Common myeloid progenitor, CD34-positive (primary cell): ENCODE measurements at regions of chr22 and their contacts with region 1.

Region 1: GRCh38 chr22:22848364-22848866 is 39.2 kb upstream of the IGLL5 start:
- DNase-seq: peak; percentile 48 to 66 (median 52)
- H3K4me3 ChIP-seq: no peak overlapping the region
- H3K27ac ChIP-seq: no peak overlapping the region
- H3K4me1 ChIP-seq: peaks cover 0 to 4% (median 1%) of the 10 kb centered on the region in 4 experiments
- H3K27me3 ChIP-seq: peaks cover 0 to 11% (median 4%) of the 10 kb centered on the region in 5 experiments

Region 2: DNA sequence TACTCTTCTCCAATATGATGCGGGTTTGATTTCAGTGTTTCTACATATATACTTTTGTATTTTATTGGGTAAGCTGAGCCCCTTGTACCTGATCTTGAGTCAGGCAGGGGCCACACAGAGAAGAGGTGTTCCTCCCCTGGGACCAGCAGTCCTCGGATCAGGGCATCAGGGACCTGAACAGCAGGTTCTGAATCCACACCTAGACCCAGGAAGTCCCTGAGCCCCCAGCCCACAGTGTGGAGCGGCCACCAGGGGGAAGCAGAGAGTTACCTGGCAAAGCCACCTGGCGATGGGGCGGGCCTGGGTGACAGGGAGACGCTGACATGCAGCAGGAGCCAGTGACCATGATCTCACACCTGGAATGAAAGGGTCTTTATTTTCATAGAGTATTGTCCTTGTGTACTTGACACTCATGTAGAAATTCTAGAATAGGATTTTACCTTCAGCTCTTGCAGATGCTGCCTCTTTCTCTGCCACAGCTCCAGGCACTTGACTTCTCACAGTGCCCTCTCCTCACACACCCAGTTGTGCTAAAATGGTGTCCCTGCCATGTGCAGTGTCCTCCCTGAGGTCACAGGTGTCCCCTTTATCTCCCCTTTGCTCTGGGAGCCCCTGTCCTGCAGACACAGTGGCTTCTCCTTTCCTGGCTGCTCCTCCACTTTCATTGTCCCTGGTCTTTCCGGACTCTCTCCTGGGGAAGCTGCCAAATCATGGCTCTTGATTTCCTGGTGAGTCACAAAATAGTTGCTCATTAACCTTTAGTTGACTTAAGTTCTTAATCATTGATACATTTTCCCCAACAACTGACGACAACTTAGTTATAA is 155.5 kb before region 1 on chr22:
- CTCF ChIA-PET with region 1: no interaction called
- POLR2A ChIA-PET with region 1: no interaction called
- DNase-seq: peak; percentile 19 to 50 (median 47)
- H3K4me3 ChIP-seq: no peak overlapping the region
- H3K27ac ChIP-seq: no peak overlapping the region
- H3K4me1 ChIP-seq: peaks cover 0 to 10% (median 6%) of the 10 kb centered on the region in 4 experiments
- H3K27me3 ChIP-seq: no peaks in the 10 kb centered on the region

Region 3: GRCh38 chr22:22737590-22737989 is 110.8 kb before region 1 on chr22:
- CTCF ChIA-PET with region 1: no interaction called
- POLR2A ChIA-PET with region 1: no interaction called
- DNase-seq: no peak
- H3K4me3 ChIP-seq: no peak overlapping the region
- H3K27ac ChIP-seq: no peak overlapping the region
- H3K4me1 ChIP-seq: peaks cover 0 to 4% (median 0%) of the 10 kb centered on the region in 4 experiments
- H3K27me3 ChIP-seq: peaks cover 0 to 11% (median 0%) of the 10 kb centered on the region in 5 experiments

Region 4: DNA sequence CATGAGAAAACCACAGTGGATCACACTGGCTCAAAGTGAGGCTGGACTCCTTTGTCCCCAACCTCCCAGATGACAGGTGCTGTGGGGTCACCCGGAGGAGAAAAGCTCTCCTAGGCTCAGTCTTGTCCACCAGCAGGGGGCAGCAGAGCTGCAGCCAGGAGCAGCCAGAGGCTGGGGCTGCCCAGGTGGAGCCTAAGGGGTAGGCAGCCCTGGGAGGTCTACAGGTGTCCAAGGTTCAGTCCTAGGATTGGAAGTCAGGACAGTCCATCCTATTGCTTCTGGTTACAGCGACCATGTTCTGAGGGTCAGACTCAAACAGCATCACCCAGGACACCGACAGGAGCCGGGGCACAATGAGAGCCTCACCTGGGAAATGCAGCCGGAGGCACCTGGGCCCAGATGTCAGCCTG is 38.4 kb before region 1 on chr22:
- CTCF ChIA-PET with region 1: interaction called, 22 read pairs
- POLR2A ChIA-PET with region 1: no interaction called
- DNase-seq: peak; percentile 50 to 67 (median 59)
- H3K4me3 ChIP-seq: no peak overlapping the region
- H3K27ac ChIP-seq: no peak overlapping the region
- H3K4me1 ChIP-seq: peaks cover 0 to 11% (median 3%) of the 10 kb centered on the region in 4 experiments
- H3K27me3 ChIP-seq: peaks cover 0 to 4% (median 0%) of the 10 kb centered on the region in 5 experiments

Region 5: GRCh38 chr22:22836635-22837034 is 11.8 kb before region 1 on chr22:
- CTCF ChIA-PET with region 1: interaction called, 12 read pairs
- POLR2A ChIA-PET with region 1: no interaction called
- DNase-seq: peak in 1 of 3 donors; percentile 31
- H3K4me3 ChIP-seq: no peak overlapping the region
- H3K27ac ChIP-seq: no peak overlapping the region
- H3K4me1 ChIP-seq: peaks cover 3 to 40% (median 10%) of the 10 kb centered on the region in 4 experiments
- H3K27me3 ChIP-seq: no peaks in the 10 kb centered on the region

Region 6: DNA sequence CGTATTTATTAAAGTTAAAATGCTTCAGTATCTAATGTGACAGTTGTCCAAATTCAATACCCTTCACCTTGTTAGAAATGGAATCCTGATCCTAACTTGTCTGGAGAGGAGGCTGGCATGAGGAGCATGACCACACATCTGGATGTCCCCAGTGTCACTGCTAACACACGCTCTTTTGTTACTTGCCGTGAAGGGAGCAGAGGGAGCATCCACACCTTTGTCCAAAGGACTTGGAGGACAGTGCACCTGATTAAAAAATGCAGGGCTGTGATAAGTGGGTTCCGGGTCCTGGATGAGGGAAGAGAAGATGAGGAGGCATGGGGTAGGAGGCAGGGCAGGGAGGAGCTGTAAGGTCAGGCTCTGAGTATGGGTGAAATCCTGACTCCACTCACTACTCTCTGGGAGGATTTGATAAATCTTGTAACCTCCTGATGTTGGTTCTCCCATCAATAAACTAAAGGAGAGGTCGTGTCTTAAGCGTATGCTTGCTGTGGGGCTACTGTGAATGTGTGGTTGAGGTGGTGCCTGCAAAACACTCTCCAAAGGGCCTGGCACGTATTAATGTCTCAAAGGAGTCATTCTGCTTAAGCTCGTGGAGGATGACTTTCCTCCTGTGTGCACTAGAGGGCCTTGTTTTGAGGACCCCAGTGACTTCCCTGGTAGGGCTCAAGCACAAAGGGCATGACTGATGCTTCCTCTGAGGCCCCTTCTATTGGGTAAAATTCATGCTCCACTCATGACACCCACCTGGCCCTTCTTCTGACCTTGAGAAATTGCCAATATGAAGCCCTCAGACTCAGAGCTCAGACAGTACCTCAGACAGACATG is 22.4 kb after region 1 on chr22:
- CTCF ChIA-PET with region 1: interaction called, 17 read pairs
- POLR2A ChIA-PET with region 1: no interaction called
- DNase-seq: peak in 2 of 3 donors; percentile 47 to 49
- H3K4me3 ChIP-seq: no peak overlapping the region
- H3K27ac ChIP-seq: no peak overlapping the region
- H3K4me1 ChIP-seq: peaks cover 0 to 11% (median 1%) of the 10 kb centered on the region in 4 experiments
- H3K27me3 ChIP-seq: no peaks in the 10 kb centered on the region

Region 7: GRCh38 chr22:22935546-22936157 is 87.2 kb after region 1 on chr22:
- CTCF ChIA-PET with region 1: interaction called, 10 read pairs
- POLR2A ChIA-PET with region 1: no interaction called
- DNase-seq: peak; percentile 39 to 61 (median 47)
- H3K4me3 ChIP-seq: no peak overlapping the region
- H3K27ac ChIP-seq: peak overlapping the region in 1 of 2 experiments; percentile 34
- H3K4me1 ChIP-seq: peaks cover 0 to 35% (median 3%) of the 10 kb centered on the region in 4 experiments
- H3K27me3 ChIP-seq: no peaks in the 10 kb centered on the region

Region 8: GRCh38 chr22:22942511-22943329 is 94.3 kb after region 1 on chr22:
- CTCF ChIA-PET with region 1: interaction called, 19 read pairs
- POLR2A ChIA-PET with region 1: no interaction called
- DNase-seq: peak; percentile 81 to 89 (median 86)
- H3K4me3 ChIP-seq: no peak overlapping the region
- H3K27ac ChIP-seq: no peak overlapping the region
- H3K4me1 ChIP-seq: peaks cover 0 to 3% (median 0%) of the 10 kb centered on the region in 4 experiments
- H3K27me3 ChIP-seq: no peaks in the 10 kb centered on the region